ENCODE measurements at regions of chr4 and their contacts with region 1.

Region 1: DNA sequence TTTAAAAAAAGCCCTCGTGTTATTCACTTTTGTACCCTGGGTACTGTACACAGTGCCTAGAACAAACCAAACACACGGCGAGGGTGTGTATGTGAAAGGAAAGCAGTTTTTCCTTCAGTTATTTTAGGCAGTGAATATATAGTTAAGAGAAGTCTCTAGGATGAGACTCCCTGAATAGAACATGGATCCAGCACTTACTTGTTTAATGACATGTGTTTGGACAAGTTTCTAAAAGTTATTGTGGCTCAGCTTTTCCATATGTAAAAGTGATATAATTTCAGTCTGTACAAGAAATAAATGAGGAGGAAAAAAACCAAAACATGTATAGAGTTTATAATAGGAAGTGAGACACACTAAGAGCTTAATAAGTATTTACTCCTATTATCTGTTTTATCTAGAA is 273.2 kb downstream of the ADGRL3 start:
- DNase-seq: no peak
- H3K4me3 ChIP-seq: no peak overlapping the region
- H3K27me3 ChIP-seq: no peaks in the 10 kb centered on the region
- CTCF ChIP-seq: no peak

Region 2: GRCh38 chr4:61520681-61521160 is 47.4 kb after region 1 on chr4:
- CTCF ChIA-PET with region 1: no interaction called
- POLR2A ChIA-PET with region 1: interaction called, 13 read pairs
- DNase-seq: no peak
- H3K4me3 ChIP-seq: no peak overlapping the region
- H3K27me3 ChIP-seq: no peaks in the 10 kb centered on the region
- CTCF ChIP-seq: no peak

Region 3: DNA sequence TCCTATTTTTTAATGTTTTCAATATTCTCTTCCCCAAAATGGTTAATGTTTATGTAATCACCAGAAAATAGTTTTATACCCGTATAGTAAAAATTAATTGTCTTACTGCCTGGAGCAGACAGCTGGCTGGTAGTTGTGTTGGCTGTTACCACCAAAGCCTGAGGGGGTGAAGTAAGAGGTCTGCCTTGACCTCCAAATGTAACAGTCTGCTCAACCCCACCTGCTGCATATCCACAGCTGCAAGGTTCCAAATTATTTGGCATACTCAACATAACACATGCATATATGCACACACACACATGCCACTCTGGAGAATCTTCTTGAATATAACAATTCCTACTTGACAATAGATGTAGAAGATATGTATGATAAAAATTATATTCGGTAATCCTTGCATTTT is 351.1 kb after region 1 on chr4:
- CTCF ChIA-PET with region 1: no interaction called
- POLR2A ChIA-PET with region 1: no interaction called
- DNase-seq: no peak
- H3K4me3 ChIP-seq: no peak overlapping the region
- H3K27me3 ChIP-seq: no peaks in the 10 kb centered on the region
- CTCF ChIP-seq: no peak

Measured in BJ (cell line).